ENCODE measurements at regions of chr12 and their contacts with region 1.

Region 1: GRCh38 chr12:7108796-7109571 is at the start of gene C1RL:
- DNase-seq: peak; percentile 87 to 91
- ATAC-seq: peak; percentile 90 to 91
- H3K4me3 ChIP-seq: peak within 1 kb of the TSS; percentile 55 to 70 (median 64)
- H3K27ac ChIP-seq: peak within 1 kb of the TSS; percentile 88 to 92 (median 89)
- H3K4me1 ChIP-seq: peaks cover 18% of the 10 kb centered on the region in 2 donors
- H3K27me3 ChIP-seq: no peaks in the 10 kb centered on the region
- CTCF ChIP-seq: peak; percentile 96 to 99 (median 97)
- POLR2A ChIP-seq: peak in 1 of 2 donors; percentile 5
- total RNA-seq, gene C1RL: 15.0 to 18.7 (median 16.7) TPM

Region 2: GRCh38 chr12:6927379-6928024 is 181.5 kb before region 1 on chr12 and contains the start of gene ATN1:
- in situ Hi-C with region 1: loop called in 3 of 4 experiments (anchors 10 to 25 kb)
- intact Hi-C with region 1: loop called (anchors 2 kb)
- DNase-seq: peak; percentile 60 to 74
- ATAC-seq: peak; percentile 41 to 55
- H3K4me3 ChIP-seq: peak within 1 kb of the TSS; percentile 70 to 92 (median 86)
- H3K27ac ChIP-seq: peak within 1 kb of the TSS; percentile 88 to 98 (median 95)
- H3K4me1 ChIP-seq: peaks cover 44 to 52% of the 10 kb centered on the region in 2 donors
- H3K27me3 ChIP-seq: no peaks in the 10 kb centered on the region
- CTCF ChIP-seq: no peak
- POLR2A ChIP-seq: peak in 1 of 2 donors; percentile 14
- total RNA-seq, gene ATN1: 11.5 to 31.5 (median 26.5) TPM

Region 3: DNA sequence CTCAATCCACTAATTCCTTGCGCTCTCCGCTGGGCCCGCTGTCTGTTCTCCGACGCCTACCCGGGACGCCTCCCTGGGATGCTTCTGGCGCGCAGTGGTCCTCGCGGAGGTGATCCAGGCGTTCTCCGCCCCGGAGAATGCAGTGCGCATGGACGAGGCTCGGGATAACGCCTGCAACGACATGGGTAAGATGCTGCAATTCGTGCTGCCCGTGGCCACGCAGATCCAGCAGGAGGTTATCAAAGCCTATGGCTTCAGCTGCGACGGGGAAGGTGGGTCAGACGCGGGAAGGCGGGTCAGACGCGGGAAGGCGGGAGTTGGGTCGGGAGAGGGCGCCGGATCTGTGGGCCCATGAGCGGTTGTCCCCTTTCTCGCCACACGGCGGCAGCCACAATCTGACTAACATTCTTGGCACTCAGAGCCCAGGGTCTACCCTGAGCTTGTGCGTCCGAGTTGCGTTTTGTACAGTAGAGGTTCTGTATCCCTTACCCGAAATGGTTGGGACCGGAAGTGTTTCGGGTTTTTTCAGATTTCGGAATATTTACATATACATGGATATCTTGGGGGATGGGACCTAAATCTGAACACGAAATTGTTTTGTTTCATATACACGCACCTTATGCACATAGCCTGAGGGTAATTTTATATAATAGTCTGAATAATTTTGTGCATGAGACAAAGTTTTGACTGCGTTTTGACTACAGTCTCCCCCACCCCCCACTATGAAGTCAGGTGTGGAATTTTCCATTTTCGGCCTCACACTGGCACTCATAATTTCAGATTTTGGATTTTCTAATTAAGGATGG is 164.4 kb before region 1 on chr12:
- in situ Hi-C with region 1: loop called in 2 of 4 experiments (anchors 10 to 25 kb)
- intact Hi-C with region 1: loop called (anchors 2 kb)
- DNase-seq: peak; percentile 83 to 89
- ATAC-seq: peak; percentile 62 to 66
- H3K4me3 ChIP-seq: peak overlapping the region; percentile 67 to 82 (median 78)
- H3K27ac ChIP-seq: peak overlapping the region; percentile 90 to 94 (median 93)
- H3K4me1 ChIP-seq: peaks cover 13 to 30% of the 10 kb centered on the region in 2 donors
- H3K27me3 ChIP-seq: no peaks in the 10 kb centered on the region
- CTCF ChIP-seq: peak; percentile 89 to 96 (median 92)
- POLR2A ChIP-seq: no peak

Region 4: GRCh38 chr12:7060353-7060954 is 48.5 kb before region 1 on chr12 and contains the start of gene C1S:
- in situ Hi-C with region 1: loop called in 3 of 4 experiments (anchors 5 kb)
- intact Hi-C with region 1: loop called (anchors 1 kb)
- DNase-seq: peak; percentile 79 to 87
- ATAC-seq: peak; percentile 99
- H3K4me3 ChIP-seq: peak within 1 kb of the TSS; percentile 40 to 53 (median 44)
- H3K27ac ChIP-seq: peak within 1 kb of the TSS; percentile 78 to 80 (median 79)
- H3K4me1 ChIP-seq: peaks cover 14 to 25% of the 10 kb centered on the region in 2 donors
- H3K27me3 ChIP-seq: no peaks in the 10 kb centered on the region
- CTCF ChIP-seq: peak; percentile 86 to 97 (median 91)
- POLR2A ChIP-seq: peak; percentile 35 to 41
- total RNA-seq, gene C1S: 58.1 to 90.8 (median 85.9) TPM

Region 5: GRCh38 chr12:7092229-7092985 is 16.6 kb before region 1 on chr12 and contains the start of gene C1R:
- in situ Hi-C with region 1: no loop called
- intact Hi-C with region 1: loop called (anchors 1 kb)
- DNase-seq: peak; percentile 50 to 70
- ATAC-seq: peak; percentile 67 to 75
- H3K4me3 ChIP-seq: peak within 1 kb of the TSS; percentile 48 to 78 (median 59)
- H3K27ac ChIP-seq: peak within 1 kb of the TSS; percentile 68 to 80 (median 70)
- H3K4me1 ChIP-seq: peaks cover 8 to 24% of the 10 kb centered on the region in 2 donors
- H3K27me3 ChIP-seq: no peaks in the 10 kb centered on the region
- CTCF ChIP-seq: peak; percentile 75 to 93 (median 88)
- POLR2A ChIP-seq: peak in 1 of 2 donors; percentile 48
- total RNA-seq, gene C1R: 47.5 to 97.8 (median 74.9) TPM

Region 6: DNA sequence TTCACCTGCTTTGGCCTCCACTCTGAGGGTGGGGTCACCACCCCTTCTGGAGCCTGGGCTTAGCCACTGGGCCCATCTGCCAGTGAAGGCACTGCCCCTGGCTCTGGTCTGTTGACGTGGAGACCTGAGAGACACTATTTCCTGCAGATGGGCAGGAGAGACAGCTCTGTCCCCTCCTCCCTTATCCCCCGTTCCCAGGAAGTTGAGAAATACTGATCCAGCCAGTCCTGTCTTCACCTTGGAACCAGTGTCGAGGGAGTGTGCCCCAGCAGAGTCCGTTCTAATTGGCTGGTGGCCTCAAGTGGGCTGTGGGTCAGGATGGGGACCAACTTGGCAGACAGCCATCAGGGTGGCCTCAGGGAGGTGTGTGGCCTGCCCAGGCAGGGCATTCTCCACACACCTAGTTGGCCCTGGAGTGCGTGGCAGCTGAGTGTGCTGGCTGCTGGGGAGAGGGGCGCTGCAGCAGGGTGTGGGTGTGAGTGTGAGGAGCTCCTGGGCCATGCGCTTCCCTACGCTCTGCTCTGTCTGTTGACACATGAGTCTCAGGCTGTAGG is 46.6 kb after region 1 on chr12:
- in situ Hi-C with region 1: no loop called
- intact Hi-C with region 1: no loop called
- DNase-seq: no peak
- ATAC-seq: no peak
- H3K4me3 ChIP-seq: no peak overlapping the region
- H3K27ac ChIP-seq: no peak overlapping the region
- H3K4me1 ChIP-seq: no peaks in the 10 kb centered on the region
- H3K27me3 ChIP-seq: no peaks in the 10 kb centered on the region
- CTCF ChIP-seq: no peak
- POLR2A ChIP-seq: no peak

Measured in gastrocnemius medialis (tissue), 4 donors.